Activated T-helper 1 cell treated with anti-CD3 and anti-CD28 coated beads, Interleukin-12 subunit alpha, Interleukin-12 subunit beta, Interleukin-2, Interleukin-4 antibody, amounts not matched to agents 30 ng/mL and 10 ng/mL and 1 ng/mL, durations not matched to agents 14 hours and 24 hours and 36 hours (primary cell): ENCODE measurements at regions of chrX and their contacts with region 1.

Region 1: GRCh38 chrX:129606918-129607317 is 47.8 kb downstream of the APLN start:
- DNase-seq: peak; percentile 26
- H3K4me3 Mint-ChIP-seq: no peak overlapping the region
- H3K27ac Mint-ChIP-seq: no peak overlapping the region
- H3K4me1 Mint-ChIP-seq: peaks cover 20% of the 10 kb centered on the region
- H3K27me3 Mint-ChIP-seq: peaks cover 3% of the 10 kb centered on the region

Region 2: GRCh38 chrX:129522184-129523078 is 84.5 kb before region 1 on chrX:
- intact Hi-C with region 1: no loop called
- DNase-seq: no peak
- H3K4me3 Mint-ChIP-seq: peak overlapping the region; percentile 75
- H3K27ac Mint-ChIP-seq: no peak overlapping the region
- H3K4me1 Mint-ChIP-seq: no peaks in the 10 kb centered on the region
- H3K27me3 Mint-ChIP-seq: peaks cover 26% of the 10 kb centered on the region

Region 3: DNA sequence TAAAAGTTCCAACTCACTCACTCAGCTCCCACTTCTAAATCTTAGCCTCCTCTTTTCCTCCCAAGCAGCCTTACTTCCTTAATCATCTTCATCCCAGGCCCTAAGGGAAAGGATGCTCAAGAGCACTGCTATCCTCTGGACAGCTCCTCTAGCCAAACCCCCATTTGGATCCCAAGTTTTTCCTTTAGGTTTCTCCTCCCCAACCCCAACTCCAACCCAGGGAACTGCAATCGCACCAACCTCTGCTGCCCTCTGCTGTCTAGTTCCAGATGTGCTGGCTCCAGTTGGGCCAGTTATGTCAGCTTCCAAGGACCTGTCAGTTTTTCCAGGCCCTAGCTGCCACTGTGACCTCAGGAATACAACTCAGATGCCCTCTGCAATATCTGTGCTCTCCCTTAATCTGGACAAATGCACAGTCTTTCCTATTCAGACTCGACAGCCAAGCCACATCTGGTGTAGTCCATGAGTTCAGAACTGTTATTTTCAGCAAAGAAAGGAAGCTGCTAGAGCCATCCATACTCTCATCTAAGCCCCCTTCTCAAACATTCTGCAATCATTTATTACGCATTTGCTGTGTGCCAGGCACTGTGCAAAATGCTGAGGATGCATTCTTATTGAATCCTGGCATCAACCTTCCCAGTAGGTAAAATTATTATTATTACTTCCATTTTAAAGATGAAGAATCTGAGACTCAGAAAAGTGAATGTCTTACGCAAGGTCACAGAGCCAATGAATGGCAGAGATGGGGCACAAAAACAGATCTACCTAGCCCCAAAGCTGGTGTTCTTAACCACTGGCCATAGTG is 119.6 kb after region 1 on chrX:
- intact Hi-C with region 1: loop called (anchors 1 kb)
- DNase-seq: no peak
- H3K4me3 Mint-ChIP-seq: no peak overlapping the region
- H3K27ac Mint-ChIP-seq: peak overlapping the region; percentile 40
- H3K4me1 Mint-ChIP-seq: peaks cover 49% of the 10 kb centered on the region
- H3K27me3 Mint-ChIP-seq: peaks cover 2% of the 10 kb centered on the region

Region 4: DNA sequence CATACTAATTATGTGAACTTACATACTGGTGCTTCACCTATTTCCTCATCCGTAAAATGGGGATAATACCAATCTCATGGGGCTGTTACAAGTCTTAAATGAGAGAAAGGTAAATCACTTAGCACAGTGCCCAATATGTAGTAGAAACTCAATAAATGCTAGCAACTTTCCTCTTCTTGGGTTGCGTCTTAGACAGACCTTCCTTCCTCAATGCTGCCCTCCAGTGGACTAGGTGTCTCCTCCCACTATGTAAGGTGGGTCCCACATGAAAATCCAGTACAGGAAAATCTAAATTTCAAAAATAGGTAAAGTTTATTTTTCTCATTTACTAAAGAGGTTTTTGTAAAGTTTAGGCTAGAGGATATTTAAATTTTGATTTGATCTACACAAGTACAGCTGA is 216.2 kb after region 1 on chrX:
- intact Hi-C with region 1: loop called (anchors 1 kb)
- DNase-seq: peak; percentile 24
- H3K4me3 Mint-ChIP-seq: no peak overlapping the region
- H3K27ac Mint-ChIP-seq: no peak overlapping the region
- H3K4me1 Mint-ChIP-seq: peaks cover 18% of the 10 kb centered on the region
- H3K27me3 Mint-ChIP-seq: no peaks in the 10 kb centered on the region

Region 5: DNA sequence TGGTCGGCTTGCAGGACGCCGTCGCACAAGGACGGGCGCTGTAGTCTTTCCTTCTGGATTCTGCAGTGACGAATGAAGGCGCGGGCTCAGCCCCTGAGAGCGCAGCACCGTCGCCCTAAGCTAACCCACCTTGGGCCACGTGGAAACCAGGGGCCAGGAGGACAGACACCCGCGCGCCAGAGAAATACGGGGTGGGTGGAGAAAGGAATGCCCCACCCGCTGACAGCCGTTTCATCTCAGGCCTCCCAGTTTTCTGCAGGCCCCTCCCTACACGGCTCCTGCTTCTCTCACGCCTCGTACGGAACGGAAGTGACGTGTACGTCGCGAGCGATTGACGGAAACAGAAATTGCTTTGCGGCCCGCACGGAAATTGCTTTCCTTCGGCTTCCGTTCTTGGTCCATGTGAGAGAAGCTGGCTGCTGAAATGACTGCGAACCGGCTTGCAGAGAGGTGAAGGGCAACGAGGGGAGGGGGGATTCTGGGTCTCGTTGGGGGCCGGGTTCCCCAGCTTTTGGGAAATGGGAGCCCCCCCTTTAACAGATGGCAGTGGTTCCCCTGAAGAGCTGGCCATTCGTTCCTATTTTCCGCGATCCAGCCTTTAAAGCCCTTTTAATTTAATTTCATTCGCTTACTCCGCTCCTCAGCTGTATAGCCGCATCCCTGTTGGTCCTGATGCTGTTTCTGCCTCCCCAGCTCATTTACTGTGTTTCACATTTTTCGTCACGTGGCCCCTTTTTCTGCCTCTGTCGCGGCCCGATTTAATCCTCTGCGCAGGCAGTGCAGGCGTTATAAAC is 299.1 kb after region 1 on chrX and contains the start of gene UTP14A:
- intact Hi-C with region 1: loop called (anchors 2 kb)
- DNase-seq: peak; percentile 81
- H3K4me3 Mint-ChIP-seq: peak within 1 kb of the TSS; percentile 96
- H3K27ac Mint-ChIP-seq: peak within 1 kb of the TSS; percentile 92
- H3K4me1 Mint-ChIP-seq: peaks cover 11% of the 10 kb centered on the region
- H3K27me3 Mint-ChIP-seq: no peaks in the 10 kb centered on the region
- total RNA-seq, gene UTP14A: 59.3 and 62.4 TPM in 2 replicates

Region 6: GRCh38 chrX:130060122-130061069 is 453.5 kb after region 1 on chrX:
- intact Hi-C with region 1: loop called (anchors 1 kb)
- DNase-seq: peak; percentile 78
- H3K4me3 Mint-ChIP-seq: peak overlapping the region; percentile 73
- H3K27ac Mint-ChIP-seq: peak overlapping the region; percentile 44
- H3K4me1 Mint-ChIP-seq: no peaks in the 10 kb centered on the region
- H3K27me3 Mint-ChIP-seq: peaks cover 2% of the 10 kb centered on the region

Region 7: GRCh38 chrX:130268500-130269170 is 661.7 kb after region 1 on chrX and contains the start of gene ZNF280C:
- intact Hi-C with region 1: loop called (anchors 2 kb)
- DNase-seq: peak; percentile 85
- H3K4me3 Mint-ChIP-seq: peak within 1 kb of the TSS; percentile 92
- H3K27ac Mint-ChIP-seq: peak within 1 kb of the TSS; percentile 91
- H3K4me1 Mint-ChIP-seq: peaks cover 19% of the 10 kb centered on the region
- H3K27me3 Mint-ChIP-seq: peaks cover 2% of the 10 kb centered on the region
- total RNA-seq, gene ZNF280C: 7.4 and 7.6 TPM in 2 replicates